ENCODE measurements at regions of chr6 and their contacts with region 1.

Region 1: DNA sequence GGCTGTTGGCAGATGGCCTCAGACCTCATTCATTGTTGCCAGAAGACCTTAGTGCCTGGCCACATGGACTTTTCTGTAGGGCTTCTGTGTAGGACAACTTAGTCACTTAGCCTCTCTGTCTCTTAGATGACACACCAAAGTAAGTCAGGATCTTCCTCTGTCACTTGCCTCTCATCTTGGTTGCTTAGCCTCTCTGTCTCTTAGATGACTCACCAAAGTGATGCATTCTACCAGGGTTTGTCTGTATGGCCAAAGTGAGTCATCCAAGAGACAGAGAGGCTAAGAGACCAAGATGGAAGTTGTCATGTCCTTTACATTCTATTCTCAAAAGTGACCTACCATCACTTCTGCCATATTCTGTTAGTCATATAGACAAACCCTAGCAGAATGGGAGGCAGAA is 255.9 kb upstream of the DEFB112 start:
- DNase-seq: no peak
- H3K4me3 ChIP-seq: no peak overlapping the region
- CTCF ChIP-seq: no peak

Region 2: DNA sequence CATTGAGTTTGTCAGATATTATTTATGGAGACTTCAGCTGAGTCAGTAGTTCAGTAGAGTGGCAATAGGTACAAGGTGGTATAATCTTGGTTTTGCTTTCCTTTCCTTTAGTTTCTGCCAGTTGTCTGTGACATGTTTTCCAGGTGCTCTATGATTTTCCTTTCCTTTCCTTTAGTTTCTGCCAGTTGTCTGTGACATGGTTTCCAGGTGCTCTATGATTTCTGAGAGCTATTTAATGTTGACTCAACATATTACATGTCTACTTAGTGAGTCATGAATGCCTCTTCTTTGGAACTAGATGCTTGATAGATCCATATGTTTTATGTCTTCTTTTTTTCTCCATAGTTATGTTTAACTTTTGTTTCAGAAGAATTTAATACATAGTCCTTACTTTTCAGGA is 69.5 kb before region 1 on chr6:
- in situ Hi-C with region 1: loop called (anchors 5 kb)
- DNase-seq: no peak
- H3K4me3 ChIP-seq: no peak overlapping the region
- CTCF ChIP-seq: no peak

Region 3: GRCh38 chr6:50404643-50405042 is 99.0 kb after region 1 on chr6:
- in situ Hi-C with region 1: no loop called
- DNase-seq: no peak
- H3K4me3 ChIP-seq: no peak overlapping the region
- CTCF ChIP-seq: no peak

Measured in astrocyte of the cerebellum (primary cell).